ENCODE measurements at regions of chr5 and their contacts with region 1.

Region 1: DNA sequence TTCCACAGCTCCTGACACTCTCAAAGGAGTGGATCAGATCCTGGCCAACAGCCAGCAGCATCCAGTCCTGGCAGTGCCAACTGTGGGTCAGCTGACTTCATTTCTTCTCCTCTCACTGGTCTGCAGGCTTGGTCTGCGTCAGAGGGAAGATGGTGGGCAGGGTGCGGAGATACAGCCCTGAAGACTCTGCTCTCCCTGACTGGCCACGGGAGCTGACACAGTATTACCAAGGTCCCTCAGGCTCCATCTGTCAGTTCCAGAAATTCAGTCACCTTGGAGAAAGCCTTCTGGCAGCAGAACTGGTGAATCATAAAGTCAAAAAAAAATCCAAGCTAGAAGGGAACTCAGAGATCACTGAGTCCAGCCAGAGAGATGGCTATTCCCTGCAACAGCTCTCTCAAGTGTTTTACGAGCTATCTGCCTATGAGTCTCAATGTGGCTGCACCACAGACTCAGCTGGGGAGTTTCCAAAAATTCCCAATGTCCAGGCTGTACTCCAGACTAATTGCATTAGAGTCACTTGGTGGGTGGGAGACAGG is 28.0 kb downstream of the C1QTNF2 start:
- DNase-seq: peak; percentile 75
- H3K4me3 ChIP-seq: no peak overlapping the region
- H3K27ac ChIP-seq: no peak overlapping the region
- H3K4me1 ChIP-seq: peaks cover 9% of the 10 kb centered on the region; the same call in 1 of the 2 replicates
- H3K27me3 ChIP-seq: no peaks in the 10 kb centered on the region

Region 2: GRCh38 chr5:160030631-160031377 is 311.7 kb before region 1 on chr5:
- in situ Hi-C with region 1: loop called (anchors 10 kb)
- DNase-seq: peak; percentile 38
- H3K4me3 ChIP-seq: no peak overlapping the region
- H3K27ac ChIP-seq: no peak overlapping the region
- H3K4me1 ChIP-seq: peaks cover 8% of the 10 kb centered on the region; the same call in 1 of the 2 replicates
- H3K27me3 ChIP-seq: no peaks in the 10 kb centered on the region

Region 3: DNA sequence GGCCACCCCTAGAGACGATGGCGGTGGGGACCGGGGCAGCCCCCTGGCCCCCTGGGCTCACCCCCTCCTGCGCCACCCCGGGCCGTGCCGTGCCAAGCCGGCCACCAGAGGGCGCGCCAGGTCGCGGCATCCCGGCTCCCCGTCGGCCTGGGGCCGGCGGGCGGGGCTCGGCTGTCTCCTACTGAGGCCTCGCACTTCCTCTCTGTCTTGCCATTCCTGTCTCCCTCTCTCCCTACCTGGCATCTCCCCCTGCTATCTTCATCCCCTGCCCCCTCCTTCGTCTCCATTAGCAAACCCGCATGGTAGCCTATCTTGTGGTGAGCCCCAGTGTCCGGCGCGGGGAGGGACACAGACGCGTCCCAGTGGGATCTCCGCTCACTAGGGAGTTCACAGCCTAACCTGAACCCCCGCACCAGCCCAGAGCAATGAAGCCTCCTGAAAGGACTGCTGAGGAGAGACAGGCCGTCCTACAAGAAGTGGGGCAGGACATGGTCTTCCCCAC is 143.0 kb before region 1 on chr5:
- in situ Hi-C with region 1: loop called (anchors 10 kb)
- DNase-seq: peak; percentile 80
- H3K4me3 ChIP-seq: peak overlapping the region; percentile 62
- H3K27ac ChIP-seq: no peak overlapping the region
- H3K4me1 ChIP-seq: no peaks in the 10 kb centered on the region; the same call in 1 of the 2 replicates
- H3K27me3 ChIP-seq: no peaks in the 10 kb centered on the region

Region 4: DNA sequence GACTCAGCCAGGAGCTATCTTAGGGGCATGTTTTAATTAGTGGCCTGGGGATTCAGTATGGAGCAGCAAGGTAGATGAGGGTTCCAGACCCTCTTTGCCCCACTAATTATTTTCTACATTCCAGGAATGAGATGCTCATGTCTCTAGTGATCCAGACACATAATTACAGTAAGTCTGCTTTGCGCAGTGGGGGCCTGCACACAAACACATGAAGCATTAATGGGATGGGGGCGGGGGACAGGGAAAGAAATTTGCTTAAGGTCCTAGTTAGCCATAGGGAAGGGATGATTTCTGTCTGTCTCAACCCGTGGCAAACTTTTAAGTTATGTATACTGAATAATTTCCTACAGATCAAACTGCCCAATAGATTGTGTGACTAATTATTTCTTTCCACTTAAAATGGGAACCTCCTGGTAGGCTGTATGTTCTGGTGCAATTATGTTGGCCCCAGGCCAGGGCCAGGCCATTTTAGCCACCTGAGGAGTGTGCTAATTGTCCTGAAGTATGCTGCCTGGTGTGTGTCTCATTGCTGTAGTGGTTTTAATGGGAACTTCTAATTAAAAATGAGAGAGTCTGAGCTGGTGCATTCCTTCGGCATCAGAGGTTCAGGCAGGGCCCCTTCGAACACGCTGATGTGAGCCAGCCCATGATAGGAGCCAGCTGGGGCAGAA is 213.6 kb after region 1 on chr5:
- in situ Hi-C with region 1: no loop called
- DNase-seq: peak; percentile 20
- H3K4me3 ChIP-seq: no peak overlapping the region
- H3K27ac ChIP-seq: peak overlapping the region; percentile 18; the same call in 1 of the 2 replicates
- H3K4me1 ChIP-seq: peaks cover 7% of the 10 kb centered on the region; the same call in 1 of the 2 replicates
- H3K27me3 ChIP-seq: no peaks in the 10 kb centered on the region